ENCODE measurements at regions of chr5 and their contacts with region 1.

Region 1: GRCh38 chr5:127030259-127031146 is at the start of gene MARCHF3:
- DNase-seq: peak; percentile 90 to 93
- ATAC-seq: peak; percentile 92 to 96
- H3K4me3 ChIP-seq: peak within 1 kb of the TSS; percentile 80 to 95 (median 94)
- H3K27ac ChIP-seq: peak within 1 kb of the TSS; percentile 89 to 95 (median 92)
- H3K4me1 ChIP-seq: peaks cover 8 to 31% of the 10 kb centered on the region in 2 donors
- H3K27me3 ChIP-seq: no peaks in the 10 kb centered on the region
- CTCF ChIP-seq: peak in 2 of 5 experiments; percentile 22 to 26
- POLR2A ChIP-seq: peak; percentile 90 to 97
- total RNA-seq, gene MARCHF3: 2.4 to 6.2 (median 3.6) TPM

Region 2: GRCh38 chr5:126869005-126869451 is 161.5 kb before region 1 on chr5:
- in situ Hi-C with region 1: loop called in 1 of 4 experiments (anchors 25 kb)
- intact Hi-C with region 1: loop called (anchors 5 kb)
- DNase-seq: no peak
- ATAC-seq: no peak
- H3K4me3 ChIP-seq: peak overlapping the region in 1 of 4 donors; percentile 21
- H3K27ac ChIP-seq: no peak overlapping the region
- H3K4me1 ChIP-seq: peaks cover 4 to 8% of the 10 kb centered on the region in 2 donors
- H3K27me3 ChIP-seq: no peaks in the 10 kb centered on the region
- CTCF ChIP-seq: no peak
- POLR2A ChIP-seq: no peak

Region 3: GRCh38 chr5:126917918-126918614 is 112.4 kb before region 1 on chr5:
- in situ Hi-C with region 1: no loop called
- intact Hi-C with region 1: loop called (anchors 5 kb)
- DNase-seq: no peak
- ATAC-seq: no peak
- H3K4me3 ChIP-seq: no peak overlapping the region
- H3K27ac ChIP-seq: no peak overlapping the region
- H3K4me1 ChIP-seq: peaks cover 13 to 16% of the 10 kb centered on the region in 2 donors
- H3K27me3 ChIP-seq: no peaks in the 10 kb centered on the region
- CTCF ChIP-seq: no peak
- POLR2A ChIP-seq: no peak

Region 4: GRCh38 chr5:127072861-127073846 is 42.7 kb after region 1 on chr5 and contains the start of gene C5orf63:
- in situ Hi-C with region 1: no loop called
- intact Hi-C with region 1: loop called (anchors 2 kb)
- DNase-seq: peak; percentile 32 to 68
- ATAC-seq: peak; percentile 74 to 89
- H3K4me3 ChIP-seq: peak within 1 kb of the TSS; percentile 61 to 73 (median 68)
- H3K27ac ChIP-seq: peak within 1 kb of the TSS; percentile 60 to 81 (median 76)
- H3K4me1 ChIP-seq: peaks cover 0 to 4% of the 10 kb centered on the region in 2 donors
- H3K27me3 ChIP-seq: no peaks in the 10 kb centered on the region
- CTCF ChIP-seq: peak in 3 of 5 experiments; percentile 29 to 54 (median 54)
- POLR2A ChIP-seq: peak in 1 of 2 donors; percentile 33
- total RNA-seq, gene C5orf63: 2.1 to 3.6 (median 3.3) TPM

Region 5: GRCh38 chr5:127186657-127187056 is 156.2 kb after region 1 on chr5:
- in situ Hi-C with region 1: no loop called
- intact Hi-C with region 1: no loop called
- DNase-seq: no peak
- ATAC-seq: no peak
- H3K4me3 ChIP-seq: no peak overlapping the region
- H3K27ac ChIP-seq: no peak overlapping the region
- H3K4me1 ChIP-seq: no peaks in the 10 kb centered on the region
- H3K27me3 ChIP-seq: no peaks in the 10 kb centered on the region
- CTCF ChIP-seq: no peak
- POLR2A ChIP-seq: no peak

Measured in gastrocnemius medialis (tissue), 4 donors.